ENCODE measurements at regions of chr15 and their contacts with region 1.

Region 1: DNA sequence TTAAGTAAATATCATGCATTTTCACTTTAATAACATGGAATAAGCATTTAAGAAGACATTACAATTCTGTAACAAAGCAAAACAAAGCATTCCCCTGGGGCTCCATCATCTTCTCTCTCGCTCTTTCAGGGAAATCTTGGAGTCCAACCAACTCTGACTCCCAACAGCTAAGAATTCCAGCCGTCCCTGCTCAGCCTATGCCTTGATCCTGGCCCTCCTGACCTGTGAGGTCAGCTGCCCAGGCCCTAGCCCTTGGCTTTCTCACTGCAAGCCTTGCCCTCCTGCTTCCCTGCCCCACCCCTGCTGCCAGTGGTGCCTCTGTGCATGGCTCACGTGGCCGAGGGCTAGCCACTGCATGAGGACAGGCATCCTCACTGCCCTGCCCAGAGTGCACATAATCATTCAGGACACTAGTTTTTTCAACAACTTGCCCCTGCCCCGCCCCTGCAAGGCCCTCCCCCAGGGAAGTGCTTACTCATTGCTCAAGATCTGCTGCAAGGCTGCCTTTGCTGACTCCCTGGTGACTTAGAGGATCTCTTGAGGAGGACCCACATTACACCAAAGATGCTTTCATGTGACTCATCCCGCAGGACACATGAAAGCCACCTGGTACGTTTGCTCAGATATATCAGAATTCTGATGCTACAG is 37.6 kb downstream of the MTMR10 start:
- DNase-seq: peak; percentile 77
- H3K4me3 ChIP-seq: no peak overlapping the region
- H3K27ac ChIP-seq: peak overlapping the region in 3 of 8 donors; percentile 10 to 56 (median 54)
- H3K4me1 ChIP-seq: peaks cover 0 to 19% (median 2%) of the 10 kb centered on the region in 6 donors
- H3K27me3 ChIP-seq: no peaks in the 10 kb centered on the region
- CTCF ChIP-seq: no peak
- POLR2A ChIP-seq: no peak

Region 2: GRCh38 chr15:30824518-30825165 is 129.2 kb before region 1 on chr15:
- intact Hi-C with region 1: no loop called
- DNase-seq: no peak
- H3K4me3 ChIP-seq: no peak overlapping the region
- H3K27ac ChIP-seq: no peak overlapping the region
- H3K4me1 ChIP-seq: no peaks in the 10 kb centered on the region
- H3K27me3 ChIP-seq: no peaks in the 10 kb centered on the region
- CTCF ChIP-seq: no peak
- POLR2A ChIP-seq: no peak

Region 3: GRCh38 chr15:30985081-30985531 is 31.3 kb after region 1 on chr15:
- intact Hi-C with region 1: loop called (anchors 5 kb)
- DNase-seq: no peak
- H3K4me3 ChIP-seq: peak overlapping the region in 2 of 8 donors; percentile 15 to 36
- H3K27ac ChIP-seq: peak overlapping the region in 7 of 8 donors; percentile 30 to 78 (median 64)
- H3K4me1 ChIP-seq: peaks cover 5 to 100% (median 91%) of the 10 kb centered on the region in 6 donors
- H3K27me3 ChIP-seq: no peaks in the 10 kb centered on the region
- CTCF ChIP-seq: no peak
- POLR2A ChIP-seq: no peak